Ovary (tissue), 10 donors: ENCODE measurements at regions of chr4 and their contacts with region 1.

Region 1: GRCh38 chr4:41214136-41214824 is at the start of gene APBB2:
- DNase-seq: peak; percentile 95 to 97 (median 96)
- H3K4me3 ChIP-seq: peak within 1 kb of the TSS; percentile 82
- H3K27ac ChIP-seq: peak within 1 kb of the TSS; percentile 53 to 66
- H3K4me1 ChIP-seq: no peaks in the 10 kb centered on the region
- H3K27me3 ChIP-seq: no peaks in the 10 kb centered on the region
- CTCF ChIP-seq: peak; percentile 58 to 95 (median 60)
- EP300 ChIP-seq: no peak
- POLR2A ChIP-seq: peak; percentile 68
- total RNA-seq, gene APBB2: 73.4 to 163 (median 101) TPM

Region 2: DNA sequence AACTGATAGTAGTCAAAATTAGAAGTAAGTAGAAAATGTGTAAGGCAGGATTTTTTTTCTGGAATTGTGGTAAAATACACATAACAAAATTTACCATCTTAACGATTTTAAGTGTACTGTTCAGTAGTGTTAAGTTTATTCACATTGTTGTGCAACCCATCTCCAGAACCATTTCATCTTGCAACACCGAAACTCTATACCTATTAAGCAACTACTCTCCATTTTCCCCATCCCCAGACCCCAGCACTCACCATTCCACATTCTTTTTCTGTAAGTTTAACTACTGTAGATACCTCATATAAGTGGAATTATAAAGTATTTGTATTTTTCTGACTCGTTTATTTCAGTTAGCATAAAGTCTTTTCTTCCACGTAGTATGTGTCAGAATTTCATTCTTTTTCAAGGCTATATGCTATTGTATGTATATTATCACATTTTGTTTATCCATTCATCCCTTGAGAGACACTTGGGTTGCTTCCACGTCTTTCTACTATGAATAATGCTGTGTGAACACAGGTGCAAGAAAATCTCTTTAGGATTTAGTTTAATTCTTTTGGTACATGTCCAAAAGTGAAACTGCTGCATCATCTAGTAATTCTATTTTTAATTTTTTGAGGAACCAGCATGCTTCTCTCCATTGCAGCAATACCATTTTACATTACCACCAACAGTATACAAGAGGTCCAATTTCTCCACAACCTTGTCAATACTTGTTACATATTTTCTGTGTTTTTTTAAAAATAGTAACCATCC is 503.6 kb before region 1 on chr4:
- intact Hi-C with region 1: no loop called
- DNase-seq: no peak
- H3K4me3 ChIP-seq: no peak overlapping the region
- H3K27ac ChIP-seq: no peak overlapping the region
- H3K4me1 ChIP-seq: no peaks in the 10 kb centered on the region
- H3K27me3 ChIP-seq: no peaks in the 10 kb centered on the region
- CTCF ChIP-seq: no peak
- EP300 ChIP-seq: no peak
- POLR2A ChIP-seq: no peak

Region 3: GRCh38 chr4:40924096-40924792 is 290.0 kb before region 1 on chr4:
- intact Hi-C with region 1: loop called (anchors 2 kb)
- DNase-seq: peak in 4 of 5 donors; percentile 53 to 66 (median 56)
- H3K4me3 ChIP-seq: no peak overlapping the region
- H3K27ac ChIP-seq: no peak overlapping the region
- H3K4me1 ChIP-seq: no peaks in the 10 kb centered on the region
- H3K27me3 ChIP-seq: no peaks in the 10 kb centered on the region
- CTCF ChIP-seq: peak in 2 of 3 donors; percentile 22 to 37
- EP300 ChIP-seq: no peak
- POLR2A ChIP-seq: no peak

Region 4: DNA sequence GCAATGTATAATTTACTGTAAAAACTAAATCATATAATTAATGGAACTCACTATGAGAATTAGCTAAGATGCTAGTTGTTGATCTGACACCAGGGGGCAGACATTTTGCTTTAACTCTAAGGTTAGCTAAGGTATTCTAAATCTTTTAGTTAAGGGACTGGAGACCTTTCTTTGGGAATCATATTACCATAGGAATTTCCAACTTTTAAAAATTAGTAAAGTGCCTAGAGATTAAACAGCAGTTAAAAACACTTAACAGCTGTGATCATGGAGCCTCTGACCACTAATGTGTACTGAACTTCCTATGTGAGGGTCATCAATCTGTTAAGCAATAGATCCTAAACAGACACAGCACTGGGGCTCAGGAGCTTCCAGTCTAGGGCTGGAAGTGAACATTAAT is 237.9 kb before region 1 on chr4:
- intact Hi-C with region 1: loop called (anchors 2 to 10 kb)
- DNase-seq: peak in 2 of 5 donors; percentile 45 to 70
- H3K4me3 ChIP-seq: no peak overlapping the region
- H3K27ac ChIP-seq: no peak overlapping the region
- H3K4me1 ChIP-seq: no peaks in the 10 kb centered on the region
- H3K27me3 ChIP-seq: no peaks in the 10 kb centered on the region
- CTCF ChIP-seq: peak in 2 of 3 donors; percentile 53 to 79
- EP300 ChIP-seq: no peak
- POLR2A ChIP-seq: no peak

Region 5: GRCh38 chr4:41120297-41121217 is 93.7 kb before region 1 on chr4:
- intact Hi-C with region 1: loop called in 1 of 4 experiments (anchors 10 kb)
- DNase-seq: peak; percentile 77 to 92 (median 87)
- H3K4me3 ChIP-seq: peak overlapping the region; percentile 15
- H3K27ac ChIP-seq: peak overlapping the region in 1 of 2 donors; percentile 78
- H3K4me1 ChIP-seq: peaks cover 12% of the 10 kb centered on the region
- H3K27me3 ChIP-seq: no peaks in the 10 kb centered on the region
- CTCF ChIP-seq: no peak
- EP300 ChIP-seq: no peak
- POLR2A ChIP-seq: no peak

Region 6: DNA sequence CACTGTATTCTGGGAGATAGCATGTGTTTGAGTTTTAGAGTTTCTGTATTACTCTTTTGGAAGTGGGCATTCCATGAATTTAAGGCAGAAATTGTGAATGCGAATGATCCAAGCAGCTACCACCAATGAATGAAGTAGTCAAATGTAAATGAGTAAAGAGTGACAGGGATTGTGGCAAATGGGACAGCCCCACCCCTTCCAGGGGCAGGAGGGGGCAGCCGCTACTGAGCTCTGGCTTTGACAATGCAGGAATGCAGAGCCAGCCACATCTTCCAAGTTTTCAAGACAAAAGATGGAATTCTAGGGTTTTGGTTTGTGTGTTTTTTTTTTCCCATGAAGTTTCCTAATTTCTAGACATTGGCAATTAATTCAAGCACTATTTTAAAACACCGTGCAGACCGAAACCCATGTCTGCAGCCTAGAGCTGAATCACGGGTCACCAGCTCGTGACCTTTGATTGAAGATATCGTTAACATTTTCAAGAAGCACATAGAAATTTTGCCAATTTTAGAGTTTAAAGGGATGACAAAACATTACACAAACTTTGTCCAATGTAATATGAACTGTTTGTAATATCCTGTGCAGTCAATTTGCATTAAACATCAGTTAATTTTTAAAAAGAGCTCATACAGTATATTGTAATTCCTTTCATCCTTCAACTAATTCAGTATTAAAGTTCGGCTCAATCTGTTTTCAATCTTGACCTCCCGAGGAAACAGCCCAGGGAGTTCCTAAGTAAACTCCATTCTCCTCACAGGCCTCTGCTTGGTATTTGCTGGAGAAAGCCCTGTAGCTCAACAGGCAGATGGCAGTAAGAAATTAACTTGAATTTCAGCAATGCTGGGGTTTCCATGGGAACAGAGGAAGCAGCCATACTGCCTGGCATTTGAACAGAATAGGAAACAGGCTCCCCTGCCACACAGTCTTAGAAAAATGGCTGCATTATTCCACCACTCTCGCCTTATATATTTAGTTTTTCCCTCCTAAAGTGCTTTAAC is 125.8 kb after region 1 on chr4:
- intact Hi-C with region 1: no loop called
- DNase-seq: no peak
- H3K4me3 ChIP-seq: no peak overlapping the region
- H3K27ac ChIP-seq: no peak overlapping the region
- H3K4me1 ChIP-seq: no peaks in the 10 kb centered on the region
- H3K27me3 ChIP-seq: no peaks in the 10 kb centered on the region
- CTCF ChIP-seq: peak in 1 of 3 donors; percentile 21
- EP300 ChIP-seq: no peak
- POLR2A ChIP-seq: no peak